PC-3 (cell line): ENCODE measurements at regions of chr1 and their contacts with region 1.

Region 1: DNA sequence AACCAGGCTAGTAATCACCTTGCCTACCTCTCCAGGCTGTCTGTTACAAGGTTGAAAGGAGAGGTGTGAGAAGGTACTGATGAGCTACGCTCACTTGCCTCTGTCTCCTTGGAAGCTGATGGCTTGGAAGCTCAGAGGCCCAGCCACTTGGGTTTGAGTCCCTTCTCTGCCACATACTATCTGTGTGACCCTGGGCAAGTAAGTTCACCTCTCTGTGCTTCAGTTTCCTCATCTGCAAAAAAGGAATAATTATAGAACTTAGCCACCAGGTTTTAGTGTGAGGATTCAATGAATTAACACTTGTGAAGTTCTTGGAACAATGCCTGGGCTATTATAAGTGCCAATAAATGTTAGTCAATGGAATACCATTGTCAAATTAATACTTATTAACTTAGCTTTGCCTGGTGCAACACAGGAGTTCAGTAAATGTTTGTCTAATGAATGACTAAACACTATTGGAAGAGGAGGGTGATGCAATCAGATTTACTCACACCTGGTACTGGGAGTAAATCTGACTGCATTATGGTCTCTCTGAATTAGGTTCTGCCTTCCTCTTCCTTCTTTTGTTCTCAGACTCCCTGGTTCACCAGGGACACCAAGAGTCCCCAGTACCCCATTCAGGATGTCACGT is 55.5 kb downstream of the TRABD2B start:
- DNase-seq: peak; percentile 71
- ATAC-seq: peak; percentile 91
- H3K4me3 ChIP-seq: no peak overlapping the region
- H3K27ac ChIP-seq: peak overlapping the region; percentile 65
- H3K4me1 ChIP-seq: peaks cover 26% of the 10 kb centered on the region
- H3K27me3 ChIP-seq: no peaks in the 10 kb centered on the region
- CTCF ChIP-seq: no peak

Region 2: GRCh38 chr1:47803815-47804498 is 137.8 kb before region 1 on chr1:
- CTCF ChIA-PET with region 1: interaction called, 10 read pairs
- POLR2A ChIA-PET with region 1: no interaction called
- intact Hi-C with region 1: no loop called
- DNase-seq: no peak
- ATAC-seq: no peak
- H3K4me3 ChIP-seq: no peak overlapping the region
- H3K27ac ChIP-seq: no peak overlapping the region
- H3K4me1 ChIP-seq: peaks cover 5% of the 10 kb centered on the region; the same call in 1 of the 2 replicates
- H3K27me3 ChIP-seq: no peaks in the 10 kb centered on the region
- CTCF ChIP-seq: no peak

Region 3: GRCh38 chr1:47871799-47872353 is 69.8 kb before region 1 on chr1:
- CTCF ChIA-PET with region 1: no interaction called
- POLR2A ChIA-PET with region 1: no interaction called
- intact Hi-C with region 1: loop called (anchors 1 kb)
- DNase-seq: peak; percentile 89
- ATAC-seq: peak; percentile 70
- H3K4me3 ChIP-seq: no peak overlapping the region
- H3K27ac ChIP-seq: peak overlapping the region; percentile 94
- H3K4me1 ChIP-seq: peaks cover 57% of the 10 kb centered on the region
- H3K27me3 ChIP-seq: no peaks in the 10 kb centered on the region
- CTCF ChIP-seq: no peak

Region 4: GRCh38 chr1:47883965-47884364 is 57.8 kb before region 1 on chr1:
- CTCF ChIA-PET with region 1: no interaction called
- POLR2A ChIA-PET with region 1: no interaction called
- intact Hi-C with region 1: no loop called
- DNase-seq: no peak
- ATAC-seq: no peak
- H3K4me3 ChIP-seq: no peak overlapping the region
- H3K27ac ChIP-seq: no peak overlapping the region
- H3K4me1 ChIP-seq: peaks cover under 1% of the 10 kb centered on the region; the same call in 1 of the 2 replicates
- H3K27me3 ChIP-seq: no peaks in the 10 kb centered on the region
- CTCF ChIP-seq: no peak

Region 5: DNA sequence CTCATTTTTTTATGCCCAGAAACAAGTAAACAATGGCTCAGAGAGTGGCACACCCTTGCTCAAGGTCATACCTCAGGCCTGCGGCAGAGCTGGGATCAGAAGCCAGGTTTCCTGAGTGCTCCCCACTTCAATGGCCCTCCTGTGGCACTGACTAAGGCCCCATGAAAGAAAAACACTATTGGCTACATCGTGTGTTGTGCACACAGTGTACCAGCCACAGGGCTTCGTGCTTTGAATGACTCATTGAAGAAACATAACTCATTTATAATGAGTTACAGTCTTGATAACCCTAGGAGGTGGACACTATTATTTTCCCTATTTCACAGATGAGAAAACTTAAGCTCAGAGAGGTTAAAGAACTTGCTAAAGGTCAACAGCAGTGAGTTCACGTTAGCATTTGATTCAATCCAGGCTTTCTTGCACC is 35.7 kb before region 1 on chr1:
- CTCF ChIA-PET with region 1: no interaction called
- POLR2A ChIA-PET with region 1: no interaction called
- intact Hi-C with region 1: no loop called
- DNase-seq: peak; percentile 82
- ATAC-seq: peak; percentile 96
- H3K4me3 ChIP-seq: no peak overlapping the region
- H3K27ac ChIP-seq: peak overlapping the region; percentile 69
- H3K4me1 ChIP-seq: peaks cover 25% of the 10 kb centered on the region
- H3K27me3 ChIP-seq: no peaks in the 10 kb centered on the region
- CTCF ChIP-seq: no peak